ENCODE measurements at regions of chr1 and their contacts with region 1.

Region 1: GRCh38 chr1:114346480-114347029 is 164.4 kb downstream of the TRIM33 start:
- DNase-seq: peak; percentile 91 to 99 (median 98)
- ATAC-seq: peak; percentile 100
- H3K4me3 ChIP-seq: peak overlapping the region; percentile 65
- H3K4me3 Mint-ChIP-seq: peak overlapping the region; percentile 89 to 98 (median 92)
- H3K27ac ChIP-seq: peak overlapping the region; percentile 53
- H3K27ac Mint-ChIP-seq: peak overlapping the region; percentile 86 to 99 (median 91)
- H3K4me1 ChIP-seq: peaks cover 29 to 38% of the 10 kb centered on the region in 2 donors
- H3K4me1 Mint-ChIP-seq: peaks cover 23 to 46% (median 33%) of the 10 kb centered on the region in 7 donors
- H3K27me3 ChIP-seq: no peaks in the 10 kb centered on the region
- H3K27me3 Mint-ChIP-seq: no peaks in the 10 kb centered on the region

Region 2: GRCh38 chr1:113811888-113812660 is 534.5 kb before region 1 on chr1 and contains the start of gene RSBN1:
- CTCF ChIA-PET with region 1: no interaction called
- POLR2A ChIA-PET with region 1: no interaction called
- intact Hi-C with region 1: loop called in 1 of 2 experiments (anchors 10 kb)
- DNase-seq: peak; percentile 92 to 99 (median 98)
- ATAC-seq: peak; percentile 95
- H3K4me3 ChIP-seq: peak within 1 kb of the TSS; percentile 88
- H3K4me3 Mint-ChIP-seq: peak within 1 kb of the TSS; percentile 91 to 99 (median 97)
- H3K27ac ChIP-seq: peak within 1 kb of the TSS; percentile 97
- H3K27ac Mint-ChIP-seq: peak within 1 kb of the TSS; percentile 96 to 99 (median 98)
- H3K4me1 ChIP-seq: peaks cover 17 to 25% of the 10 kb centered on the region in 2 donors
- H3K4me1 Mint-ChIP-seq: peaks cover 20 to 51% (median 38%) of the 10 kb centered on the region in 7 donors
- H3K27me3 ChIP-seq: no peaks in the 10 kb centered on the region
- H3K27me3 Mint-ChIP-seq: no peaks in the 10 kb centered on the region
- total RNA-seq, gene RSBN1: 29.9 to 58.1 (median 42.0) TPM

Region 3: DNA sequence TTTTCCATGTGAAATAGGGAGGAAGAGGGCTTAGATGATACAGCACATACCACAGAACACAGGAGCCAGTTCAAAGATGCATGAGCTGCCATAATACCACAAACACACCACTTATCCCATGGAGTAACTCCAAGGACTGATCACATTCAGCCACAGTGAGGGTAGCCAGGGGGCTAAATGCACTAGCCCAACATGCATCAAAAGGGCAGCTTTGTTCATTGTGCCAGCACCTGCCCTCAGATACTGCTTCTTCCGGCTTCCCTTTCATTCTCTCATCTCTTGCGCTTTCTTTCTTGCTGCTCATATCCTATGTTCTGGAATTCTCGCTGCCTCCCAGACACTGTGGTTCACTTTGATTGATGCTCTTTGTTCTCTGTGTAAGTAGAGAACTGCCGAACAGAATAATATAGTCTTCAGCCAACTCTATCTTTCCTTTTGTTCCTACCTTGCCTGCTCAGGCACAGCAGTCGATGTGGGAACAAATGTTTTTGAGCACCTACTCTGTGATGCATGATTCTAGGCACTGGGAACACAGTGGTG is 142.9 kb before region 1 on chr1:
- CTCF ChIA-PET with region 1: no interaction called
- POLR2A ChIA-PET with region 1: no interaction called
- intact Hi-C with region 1: no loop called
- DNase-seq: no peak
- ATAC-seq: no peak
- H3K4me3 ChIP-seq: no peak overlapping the region
- H3K4me3 Mint-ChIP-seq: no peak overlapping the region
- H3K27ac ChIP-seq: no peak overlapping the region
- H3K27ac Mint-ChIP-seq: no peak overlapping the region
- H3K4me1 ChIP-seq: peaks cover 0 to 3% of the 10 kb centered on the region in 2 donors
- H3K4me1 Mint-ChIP-seq: peaks cover 0 to 16% (median 0%) of the 10 kb centered on the region in 7 donors
- H3K27me3 ChIP-seq: peaks cover 0 to 5% of the 10 kb centered on the region in 2 donors
- H3K27me3 Mint-ChIP-seq: peaks cover 32 to 66% (median 49%) of the 10 kb centered on the region in 5 donors

Region 4: DNA sequence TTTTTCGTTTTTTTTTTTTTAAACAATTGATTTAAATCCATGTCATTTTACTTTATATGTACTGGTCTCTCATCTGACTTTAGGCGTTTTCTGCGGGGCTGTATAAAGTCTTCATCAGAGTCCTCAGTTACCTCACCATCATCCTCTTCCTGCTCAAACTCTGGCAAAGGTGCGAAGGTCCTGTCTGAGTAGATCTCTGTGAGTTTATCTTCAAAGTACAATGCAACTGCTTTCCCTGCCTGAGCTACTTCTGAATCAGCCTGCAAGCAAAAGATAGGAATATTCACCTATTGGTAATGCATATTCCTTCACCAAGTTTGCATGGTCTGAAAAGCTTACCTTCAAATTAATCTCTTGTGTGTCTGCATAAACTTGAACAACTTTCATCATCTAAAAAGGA is 51.0 kb after region 1 on chr1:
- CTCF ChIA-PET with region 1: no interaction called
- POLR2A ChIA-PET with region 1: no interaction called
- intact Hi-C with region 1: loop called in 1 of 2 experiments (anchors 2 kb)
- DNase-seq: no peak
- ATAC-seq: no peak
- H3K4me3 ChIP-seq: no peak overlapping the region
- H3K4me3 Mint-ChIP-seq: no peak overlapping the region
- H3K27ac ChIP-seq: no peak overlapping the region
- H3K27ac Mint-ChIP-seq: no peak overlapping the region
- H3K4me1 ChIP-seq: no peaks in the 10 kb centered on the region
- H3K4me1 Mint-ChIP-seq: no peaks in the 10 kb centered on the region
- H3K27me3 ChIP-seq: no peaks in the 10 kb centered on the region
- H3K27me3 Mint-ChIP-seq: no peaks in the 10 kb centered on the region

Region 5: GRCh38 chr1:114581335-114582287 is 235.1 kb after region 1 on chr1 and contains the start of gene BCAS2:
- CTCF ChIA-PET with region 1: interaction called, 3 read pairs
- POLR2A ChIA-PET with region 1: no interaction called
- intact Hi-C with region 1: loop called (anchors 1 kb)
- DNase-seq: peak; percentile 71 to 98 (median 97)
- ATAC-seq: peak; percentile 97
- H3K4me3 ChIP-seq: peak within 1 kb of the TSS; percentile 76
- H3K4me3 Mint-ChIP-seq: peak within 1 kb of the TSS; percentile 92 to 99 (median 98)
- H3K27ac ChIP-seq: peak within 1 kb of the TSS; percentile 93
- H3K27ac Mint-ChIP-seq: peak within 1 kb of the TSS; percentile 95 to 99 (median 98)
- H3K4me1 ChIP-seq: peaks cover 21 to 23% of the 10 kb centered on the region in 2 donors
- H3K4me1 Mint-ChIP-seq: peaks cover 14 to 55% (median 41%) of the 10 kb centered on the region in 7 donors
- H3K27me3 ChIP-seq: peaks cover 0 to 3% of the 10 kb centered on the region in 2 donors
- H3K27me3 Mint-ChIP-seq: peaks cover 0 to 4% (median 4%) of the 10 kb centered on the region in 5 donors
- total RNA-seq, gene BCAS2: 32.3 to 87.1 (median 46.0) TPM

Region 6: DNA sequence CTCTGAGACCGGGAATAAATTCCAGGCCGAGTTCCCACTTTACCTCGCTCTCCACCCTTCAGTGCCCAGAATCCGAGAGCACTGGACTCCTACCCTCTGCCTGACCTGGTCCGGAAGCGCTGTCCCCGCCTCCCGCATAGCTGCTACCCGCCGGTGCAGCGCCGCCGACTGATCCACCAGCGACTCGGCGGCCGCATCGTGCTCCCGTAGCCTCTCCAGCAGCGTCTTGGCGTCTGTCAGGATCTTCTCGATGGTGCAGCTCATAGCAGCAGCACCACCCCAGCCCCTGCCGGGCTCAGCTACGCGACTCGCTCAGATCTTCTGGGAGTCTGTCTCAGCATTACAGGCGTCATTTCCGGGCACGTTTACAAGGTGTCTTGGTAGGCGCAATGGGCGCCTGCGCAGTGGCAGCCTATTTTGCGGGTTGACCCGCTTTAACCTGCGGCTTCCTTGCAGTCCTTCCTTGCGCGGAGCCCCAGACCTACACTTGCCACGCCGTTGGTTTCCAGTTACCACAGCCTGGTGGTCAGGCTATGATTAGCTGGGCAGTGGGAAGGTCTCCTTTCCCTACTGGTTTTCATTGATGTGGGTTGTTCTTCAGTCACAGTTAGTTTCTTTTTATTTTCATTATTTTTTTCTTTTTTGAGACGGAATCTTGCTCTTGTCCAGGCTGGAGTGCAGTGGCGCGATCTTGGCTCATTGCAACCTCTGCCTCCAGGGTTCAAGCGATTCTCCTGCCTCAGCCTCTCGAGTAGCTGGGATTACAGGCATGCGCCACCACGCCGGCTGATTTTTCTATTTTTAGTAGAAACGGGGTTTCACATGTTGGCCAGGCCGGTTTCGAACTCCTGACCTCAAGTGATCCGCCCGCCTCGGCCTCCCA is 434.0 kb after region 1 on chr1 and contains the start of gene SIKE1:
- CTCF ChIA-PET with region 1: no interaction called
- POLR2A ChIA-PET with region 1: no interaction called
- intact Hi-C with region 1: loop called (anchors 1 to 2 kb)
- DNase-seq: peak; percentile 82 to 98 (median 95)
- ATAC-seq: peak; percentile 99
- H3K4me3 ChIP-seq: peak within 1 kb of the TSS; percentile 78
- H3K4me3 Mint-ChIP-seq: peak within 1 kb of the TSS; percentile 98 to 100 (median 100)
- H3K27ac ChIP-seq: peak within 1 kb of the TSS; percentile 87
- H3K27ac Mint-ChIP-seq: peak within 1 kb of the TSS; percentile 96 to 100 (median 99)
- H3K4me1 ChIP-seq: peaks cover 0 to 8% of the 10 kb centered on the region in 2 donors
- H3K4me1 Mint-ChIP-seq: peaks cover 19 to 40% (median 30%) of the 10 kb centered on the region in 7 donors
- H3K27me3 ChIP-seq: no peaks in the 10 kb centered on the region
- H3K27me3 Mint-ChIP-seq: peaks cover 0 to 17% (median 0%) of the 10 kb centered on the region in 5 donors
- total RNA-seq, gene SIKE1: 43.4 to 69.4 (median 61.2) TPM

Region 7: GRCh38 chr1:115112496-115113375 is 766.2 kb after region 1 on chr1:
- CTCF ChIA-PET with region 1: no interaction called
- POLR2A ChIA-PET with region 1: no interaction called
- intact Hi-C with region 1: loop called in 1 of 2 experiments (anchors 5 kb)
- DNase-seq: peak; percentile 18 to 62 (median 40)
- ATAC-seq: peak; percentile 61
- H3K4me3 ChIP-seq: no peak overlapping the region
- H3K4me3 Mint-ChIP-seq: no peak overlapping the region
- H3K27ac ChIP-seq: no peak overlapping the region
- H3K27ac Mint-ChIP-seq: peak overlapping the region in 5 of 9 donors; percentile 23 to 63 (median 39)
- H3K4me1 ChIP-seq: no peaks in the 10 kb centered on the region
- H3K4me1 Mint-ChIP-seq: peaks cover 0 to 18% (median 8%) of the 10 kb centered on the region in 7 donors
- H3K27me3 ChIP-seq: no peaks in the 10 kb centered on the region
- H3K27me3 Mint-ChIP-seq: peaks cover 0 to 3% (median 0%) of the 10 kb centered on the region in 5 donors